Activated B cell treated with CpG ODN at 0.5 μM for 24 hours (primary cell): ENCODE measurements at regions of chr12 and their contacts with region 1.

Region 1: GRCh38 chr12:101919447-101919846 is 42.1 kb downstream of the DRAM1 start:
- DNase-seq: no peak
- ATAC-seq: no peak
- H3K4me3 Mint-ChIP-seq: no peak overlapping the region
- H3K27ac Mint-ChIP-seq: no peak overlapping the region
- H3K4me1 Mint-ChIP-seq: peaks cover 35% of the 10 kb centered on the region
- H3K27me3 Mint-ChIP-seq: no peaks in the 10 kb centered on the region
- CTCF ChIP-seq: no peak

Region 2: GRCh38 chr12:101414533-101415119 is 504.8 kb before region 1 on chr12:
- CTCF ChIA-PET with region 1: no interaction called
- POLR2A ChIA-PET with region 1: no interaction called
- intact Hi-C with region 1: loop called (anchors 1 kb)
- DNase-seq: no peak
- ATAC-seq: no peak
- H3K4me3 Mint-ChIP-seq: no peak overlapping the region
- H3K27ac Mint-ChIP-seq: no peak overlapping the region
- H3K4me1 Mint-ChIP-seq: no peaks in the 10 kb centered on the region
- H3K27me3 Mint-ChIP-seq: no peaks in the 10 kb centered on the region
- CTCF ChIP-seq: peak; percentile 24

Region 3: GRCh38 chr12:101830367-101831325 is 88.8 kb before region 1 on chr12 and contains the start of gene GNPTAB:
- CTCF ChIA-PET with region 1: no interaction called
- POLR2A ChIA-PET with region 1: no interaction called
- intact Hi-C with region 1: no loop called
- DNase-seq: peak; percentile 97
- ATAC-seq: peak; percentile 94
- H3K4me3 Mint-ChIP-seq: peak within 1 kb of the TSS; percentile 96
- H3K27ac Mint-ChIP-seq: peak within 1 kb of the TSS; percentile 87
- H3K4me1 Mint-ChIP-seq: peaks cover 33% of the 10 kb centered on the region
- H3K27me3 Mint-ChIP-seq: no peaks in the 10 kb centered on the region
- CTCF ChIP-seq: no peak
- total RNA-seq, gene GNPTAB: 41.8 and 42.8 TPM in 2 replicates

Region 4: DNA sequence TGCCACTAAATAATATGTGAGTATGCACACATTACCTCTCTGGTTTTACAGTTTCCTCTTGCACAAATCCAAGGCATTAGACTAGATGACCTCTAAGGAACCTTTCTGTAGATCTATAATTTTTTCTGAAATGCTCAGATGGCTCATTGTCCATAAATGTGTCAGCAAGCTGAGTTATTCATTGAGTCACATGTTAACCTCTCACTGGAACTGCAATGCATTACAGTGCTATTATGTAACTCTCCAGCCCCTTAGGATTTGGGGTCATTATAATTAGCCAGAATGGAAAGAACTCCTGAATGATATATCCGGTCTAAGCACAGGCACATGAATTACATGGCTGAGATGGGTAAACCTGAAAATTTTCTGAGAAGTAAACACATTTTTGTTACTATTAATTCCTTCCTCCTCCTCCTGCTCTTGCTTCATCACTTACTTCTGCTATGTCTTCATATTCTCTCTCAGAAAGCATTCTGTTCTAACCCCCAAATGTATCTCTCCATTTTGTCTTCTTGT is 62.3 kb before region 1 on chr12:
- CTCF ChIA-PET with region 1: no interaction called
- POLR2A ChIA-PET with region 1: no interaction called
- intact Hi-C with region 1: no loop called
- DNase-seq: no peak
- ATAC-seq: no peak
- H3K4me3 Mint-ChIP-seq: no peak overlapping the region
- H3K27ac Mint-ChIP-seq: no peak overlapping the region
- H3K4me1 Mint-ChIP-seq: peaks cover 47% of the 10 kb centered on the region
- H3K27me3 Mint-ChIP-seq: no peaks in the 10 kb centered on the region
- CTCF ChIP-seq: no peak

Region 5: GRCh38 chr12:101939856-101940265 is 20.4 kb after region 1 on chr12:
- CTCF ChIA-PET with region 1: interaction called, 27 read pairs
- POLR2A ChIA-PET with region 1: interaction called, 23 read pairs
- intact Hi-C with region 1: loop called (anchors 1 kb)
- DNase-seq: no peak
- ATAC-seq: peak; percentile 45
- H3K4me3 Mint-ChIP-seq: peak overlapping the region; percentile 13
- H3K27ac Mint-ChIP-seq: peak overlapping the region; percentile 74
- H3K4me1 Mint-ChIP-seq: peaks cover 62% of the 10 kb centered on the region
- H3K27me3 Mint-ChIP-seq: no peaks in the 10 kb centered on the region
- CTCF ChIP-seq: peak; percentile 21

Region 6: DNA sequence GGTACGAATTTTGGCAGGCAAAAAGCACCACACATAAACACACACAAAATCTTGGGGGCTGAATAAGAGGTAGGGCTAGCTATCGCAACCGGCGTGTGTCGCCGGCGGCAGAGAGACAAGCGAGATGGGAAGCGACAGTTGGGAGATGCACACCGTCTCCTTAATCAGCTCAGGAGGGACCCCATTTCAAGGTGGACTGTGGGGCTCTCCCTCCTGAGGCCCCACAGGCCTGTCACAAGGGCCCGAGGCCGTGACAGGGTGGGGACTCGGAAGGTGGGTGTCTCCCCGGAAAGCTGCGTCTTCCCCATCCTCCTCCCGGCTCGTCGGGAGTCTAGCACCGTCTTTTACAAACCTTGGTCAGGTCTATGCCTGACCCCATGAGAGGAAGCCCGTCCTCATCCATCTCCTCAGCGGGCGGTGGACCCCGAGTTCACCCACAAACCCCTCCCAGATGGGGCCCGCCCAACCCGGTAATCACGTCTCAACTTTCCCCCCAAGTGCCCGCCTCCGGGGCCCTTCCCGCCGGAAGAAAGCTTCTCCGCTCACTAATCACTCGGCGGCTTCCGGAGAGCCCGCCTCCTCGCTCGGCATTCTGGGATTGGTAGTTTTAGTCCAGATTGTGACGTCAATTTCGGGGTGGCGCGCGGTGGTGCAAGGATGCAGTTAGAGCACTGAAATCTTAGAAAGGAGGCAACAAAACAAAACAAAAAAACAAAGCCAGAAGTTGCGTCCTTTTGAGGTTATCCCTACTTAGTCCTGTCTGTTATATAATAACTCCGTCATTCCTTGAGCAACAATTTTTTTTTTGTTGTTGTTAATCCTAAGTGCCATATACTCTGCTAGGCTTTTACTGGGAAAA is 142.3 kb after region 1 on chr12 and contains the start of gene WASHC3:
- CTCF ChIA-PET with region 1: no interaction called
- POLR2A ChIA-PET with region 1: interaction called, 7 read pairs
- intact Hi-C with region 1: loop called (anchors 1 kb)
- DNase-seq: peak; percentile 89
- ATAC-seq: peak; percentile 95
- H3K4me3 Mint-ChIP-seq: peak within 1 kb of the TSS; percentile 98
- H3K27ac Mint-ChIP-seq: peak within 1 kb of the TSS; percentile 97
- H3K4me1 Mint-ChIP-seq: peaks cover 21% of the 10 kb centered on the region
- H3K27me3 Mint-ChIP-seq: no peaks in the 10 kb centered on the region
- CTCF ChIP-seq: no peak
- total RNA-seq, gene WASHC3: 47.3 and 50.6 TPM in 2 replicates

Region 7: DNA sequence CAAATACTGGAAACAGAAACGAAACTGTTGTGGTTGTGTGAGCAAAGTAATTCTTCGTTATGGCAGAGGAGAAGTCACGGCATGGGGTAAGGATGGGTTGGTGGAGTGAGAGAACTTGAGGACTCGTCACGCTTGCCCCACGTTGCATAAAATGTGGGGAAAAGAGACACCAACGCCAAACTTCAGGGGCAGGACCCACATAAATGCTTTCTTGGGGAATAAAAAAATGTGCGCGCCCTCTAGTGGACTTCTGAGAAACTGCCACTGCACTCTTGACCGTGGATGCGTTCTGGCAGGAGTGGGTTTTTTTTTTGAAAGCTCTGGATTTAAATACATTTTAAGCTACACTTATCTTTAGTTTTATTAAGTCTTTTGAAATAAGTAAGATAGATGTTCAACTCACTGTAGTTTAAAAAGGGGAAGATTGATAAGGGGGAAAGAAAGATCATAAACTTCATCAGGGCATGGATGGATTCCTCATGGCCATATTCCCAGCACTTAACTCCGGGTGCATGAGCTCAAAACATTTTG is 565.0 kb after region 1 on chr12:
- CTCF ChIA-PET with region 1: interaction called, 13 read pairs
- POLR2A ChIA-PET with region 1: no interaction called
- intact Hi-C with region 1: loop called (anchors 1 kb)
- DNase-seq: peak; percentile 23
- ATAC-seq: peak; percentile 78
- H3K4me3 Mint-ChIP-seq: peak overlapping the region; percentile 70
- H3K27ac Mint-ChIP-seq: peak overlapping the region; percentile 87
- H3K4me1 Mint-ChIP-seq: peaks cover 23% of the 10 kb centered on the region
- H3K27me3 Mint-ChIP-seq: no peaks in the 10 kb centered on the region
- CTCF ChIP-seq: peak; percentile 87

Region 8: GRCh38 chr12:102769319-102769916 is 850.0 kb after region 1 on chr12:
- CTCF ChIA-PET with region 1: no interaction called
- POLR2A ChIA-PET with region 1: no interaction called
- intact Hi-C with region 1: loop called (anchors 1 kb)
- DNase-seq: no peak
- ATAC-seq: peak; percentile 71
- H3K4me3 Mint-ChIP-seq: no peak overlapping the region
- H3K27ac Mint-ChIP-seq: no peak overlapping the region
- H3K4me1 Mint-ChIP-seq: peaks cover 2% of the 10 kb centered on the region
- H3K27me3 Mint-ChIP-seq: peaks cover 10% of the 10 kb centered on the region
- CTCF ChIP-seq: no peak